ENCODE measurements at regions of chr6 and their contacts with region 1.

Region 1: DNA sequence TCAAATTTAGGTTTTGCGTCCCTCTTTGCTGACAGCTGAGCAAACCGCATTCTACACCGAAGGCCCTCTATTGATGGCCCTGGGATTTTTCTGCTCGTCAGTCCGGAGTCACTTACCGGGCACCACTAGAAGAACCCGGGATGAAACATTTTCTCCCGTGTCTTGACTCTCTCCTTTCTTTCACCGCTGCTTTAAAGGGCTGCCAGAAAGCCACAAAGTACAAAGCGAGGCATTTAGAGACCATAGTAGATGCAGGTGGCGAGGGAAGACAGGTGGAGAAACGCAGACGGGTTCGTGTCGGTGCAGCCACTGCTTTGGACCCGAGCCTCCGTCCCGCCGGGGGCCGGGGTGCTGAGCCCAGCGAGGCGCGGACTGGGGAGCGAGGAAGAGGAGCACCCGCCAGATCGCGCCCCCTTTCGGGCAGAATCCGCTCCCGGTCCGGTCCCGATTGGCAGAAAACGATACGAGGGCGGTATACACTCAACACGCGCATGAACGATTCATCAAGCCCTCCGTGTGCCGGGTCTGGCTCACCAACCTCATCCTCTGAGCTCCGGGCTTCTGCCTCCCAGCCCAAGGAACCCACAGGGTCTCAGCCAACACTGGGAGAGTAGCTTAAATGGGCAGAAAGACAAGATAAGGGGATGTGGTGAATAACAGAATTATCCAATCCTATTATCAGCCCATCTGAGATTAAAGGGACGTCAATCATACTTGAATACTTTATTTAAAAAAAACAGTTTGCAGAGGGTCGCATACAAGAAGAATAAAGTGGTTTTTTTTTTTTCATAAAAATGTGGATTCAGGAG is 84.9 kb downstream of the TRIM27 start:
- DNase-seq: peak; percentile 78 to 90
- ATAC-seq: peak; percentile 76

Region 2: DNA sequence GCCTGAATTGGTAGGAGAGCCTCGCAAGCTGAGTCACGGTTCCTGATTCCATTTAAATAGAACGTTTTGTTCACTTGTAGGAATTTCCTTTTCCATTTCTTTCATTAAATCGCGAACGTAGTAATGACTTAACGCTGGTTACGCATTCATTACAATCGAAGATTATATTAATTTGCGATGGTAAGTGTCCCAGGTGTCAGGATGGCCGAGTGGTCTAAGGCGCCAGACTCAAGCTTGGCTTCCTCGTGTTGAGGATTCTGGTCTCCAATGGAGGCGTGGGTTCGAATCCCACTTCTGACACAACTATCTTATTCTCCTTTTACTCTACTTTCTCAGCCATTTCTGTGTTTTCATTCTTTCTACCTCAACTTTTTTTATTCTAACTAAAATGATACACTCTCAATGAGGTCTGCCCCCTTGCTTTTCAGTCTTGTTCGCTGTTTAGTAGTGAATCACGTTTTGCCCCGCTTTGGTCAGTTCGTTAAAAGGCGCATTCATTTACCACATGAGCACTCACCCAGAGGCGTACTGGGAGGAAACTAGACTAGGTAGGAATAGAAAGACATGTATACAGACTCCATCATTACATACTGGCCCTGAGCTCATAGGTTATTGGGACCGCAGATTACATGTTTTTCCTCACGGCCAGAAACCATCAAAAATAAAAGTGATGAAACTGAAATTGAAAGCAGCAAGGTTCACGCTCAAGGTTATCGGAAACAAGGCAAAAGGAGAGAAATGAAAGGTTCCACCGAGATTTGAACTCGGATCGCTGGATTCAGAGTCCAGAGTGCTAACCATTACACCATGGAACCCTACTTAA is 102.2 kb after region 1 on chr6:
- intact Hi-C with region 1: loop called in 1 of 2 experiments (anchors 5 kb)
- DNase-seq: peak; percentile 70 to 72
- ATAC-seq: peak; percentile 72

Region 3: GRCh38 chr6:28960846-28961500 is 122.1 kb after region 1 on chr6:
- intact Hi-C with region 1: no loop called
- DNase-seq: no peak
- ATAC-seq: peak; percentile 45

Region 4: DNA sequence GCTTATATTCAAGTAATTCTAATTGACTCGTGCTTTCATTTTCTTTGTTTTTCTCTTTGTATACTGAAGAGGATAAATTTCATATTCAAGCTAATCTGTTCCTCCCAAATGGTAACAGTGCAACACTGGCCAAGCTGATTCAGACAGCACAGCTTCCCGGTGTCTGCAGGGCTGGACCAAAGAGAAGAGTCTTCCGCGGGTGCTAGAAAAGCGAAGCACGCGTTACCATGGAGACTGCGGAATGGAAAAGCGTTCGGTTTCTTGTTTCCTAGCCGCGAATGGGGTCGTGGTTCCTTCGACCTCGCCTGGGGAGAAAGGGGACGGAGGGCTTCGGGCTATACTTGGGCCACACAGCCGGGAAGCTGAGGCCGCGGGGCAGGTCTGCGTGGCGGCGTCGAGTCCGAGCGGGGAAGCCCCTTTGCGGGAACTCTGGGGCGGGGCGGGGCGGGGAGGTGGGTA is 172.5 kb after region 1 on chr6:
- intact Hi-C with region 1: loop called (anchors 5 to 10 kb)
- DNase-seq: peak; percentile 28 to 33
- ATAC-seq: peak; percentile 55

Region 5: GRCh38 chr6:29016559-29017427 is 178.0 kb after region 1 on chr6:
- intact Hi-C with region 1: loop called (anchors 5 to 10 kb)
- DNase-seq: peak; percentile 68 to 89
- ATAC-seq: peak; percentile 96

Measured in left colon (tissue), 2 donors.